GM12878 (cell line): ENCODE measurements at regions of chr9 and their contacts with region 1.

Region 1: DNA sequence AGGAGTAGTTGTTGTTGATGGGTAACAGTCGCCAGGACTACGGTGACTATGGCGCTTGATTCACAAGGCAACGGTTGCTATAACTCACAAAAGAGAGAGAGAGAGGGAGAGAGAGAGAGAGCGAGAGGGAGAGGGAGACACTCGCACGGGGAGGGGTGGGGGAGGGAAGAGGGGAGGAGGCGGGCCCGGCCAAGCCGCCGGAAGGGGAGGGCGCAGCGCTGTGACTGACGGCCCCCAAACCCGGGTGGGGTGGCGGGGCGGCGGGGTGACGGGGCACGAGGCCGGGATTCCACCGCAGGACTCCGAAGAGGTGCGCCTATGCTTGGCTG is at the start of gene RFX3:
- DNase-seq: peak; percentile 78
- ATAC-seq: peak; percentile 64
- H3K4me3 ChIP-seq: peak within 1 kb of the TSS; percentile 95
- H3K27ac ChIP-seq: peak within 1 kb of the TSS; percentile 96
- H3K4me1 ChIP-seq: no peaks in the 10 kb centered on the region; the same call in 1 of the 2 replicates
- H3K27me3 ChIP-seq: no peaks in the 10 kb centered on the region
- CTCF ChIP-seq: no peak
- EP300 ChIP-seq: peak; percentile 33 to 93; a peak in 3 of 4 replicates
- POLR2A ChIP-seq: no peak
- RAD21 ChIP-seq: 0 out of 2 replicates have a peak, but pooled peaks have one; percentile 1
- polyA plus RNA-seq, gene RFX3: 1.2 to 1.8 TPM

Region 2: GRCh38 chr9:3240656-3241268 is 285.0 kb before region 1 on chr9:
- CTCF ChIA-PET with region 1: interaction called, 4 read pairs
- POLR2A ChIA-PET with region 1: no interaction called
- RAD21 ChIA-PET with region 1: interaction called, 5 read pairs
- SMC1A ChIA-PET with region 1: interaction called, 4 read pairs
- in situ Hi-C with region 1: no loop called
- intact Hi-C with region 1: loop called (anchors 5 kb)
- DNase-seq: peak; percentile 35
- ATAC-seq: peak; percentile 97
- H3K4me3 ChIP-seq: no peak overlapping the region
- H3K27ac ChIP-seq: no peak overlapping the region
- H3K4me1 ChIP-seq: peaks cover 10% of the 10 kb centered on the region; the same call in 1 of the 2 replicates
- H3K27me3 ChIP-seq: no peaks in the 10 kb centered on the region
- CTCF ChIP-seq: peak; percentile 81 to 93 (median 86); a peak in 5 of 6 replicates
- EP300 ChIP-seq: no peak
- POLR2A ChIP-seq: no peak
- RAD21 ChIP-seq: peak; percentile 89

Region 3: DNA sequence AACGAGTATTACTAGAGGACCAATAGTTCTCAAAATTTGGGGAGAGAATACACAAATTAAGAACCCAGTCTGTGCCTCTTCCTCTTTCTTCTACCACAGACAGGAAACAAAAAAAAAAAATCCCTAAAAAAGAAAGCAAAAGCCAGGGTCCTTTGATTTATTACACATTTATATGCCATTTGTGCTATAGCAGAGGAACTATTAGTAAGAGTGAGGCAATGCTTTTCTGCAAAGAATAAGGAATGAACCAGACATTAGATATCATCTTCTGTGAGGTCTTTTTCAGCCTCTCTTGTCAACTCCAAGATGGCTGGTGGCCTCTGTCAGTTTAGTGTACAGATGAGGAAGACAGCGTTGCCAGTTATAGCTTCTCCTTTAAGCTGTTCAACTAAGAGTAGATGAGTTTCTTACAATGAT is 127.6 kb before region 1 on chr9:
- CTCF ChIA-PET with region 1: no interaction called
- POLR2A ChIA-PET with region 1: no interaction called
- RAD21 ChIA-PET with region 1: no interaction called
- SMC1A ChIA-PET with region 1: no interaction called
- in situ Hi-C with region 1: no loop called
- intact Hi-C with region 1: loop called (anchors 5 kb)
- DNase-seq: no peak
- ATAC-seq: peak; percentile 78
- H3K4me3 ChIP-seq: peak overlapping the region; percentile 23; the same call in 1 of the 2 replicates
- H3K27ac ChIP-seq: peak overlapping the region; percentile 74
- H3K4me1 ChIP-seq: peaks cover 3% of the 10 kb centered on the region; the same call in 1 of the 2 replicates
- H3K27me3 ChIP-seq: no peaks in the 10 kb centered on the region
- CTCF ChIP-seq: no peak
- EP300 ChIP-seq: no peak
- POLR2A ChIP-seq: no peak
- RAD21 ChIP-seq: no peak

Region 4: DNA sequence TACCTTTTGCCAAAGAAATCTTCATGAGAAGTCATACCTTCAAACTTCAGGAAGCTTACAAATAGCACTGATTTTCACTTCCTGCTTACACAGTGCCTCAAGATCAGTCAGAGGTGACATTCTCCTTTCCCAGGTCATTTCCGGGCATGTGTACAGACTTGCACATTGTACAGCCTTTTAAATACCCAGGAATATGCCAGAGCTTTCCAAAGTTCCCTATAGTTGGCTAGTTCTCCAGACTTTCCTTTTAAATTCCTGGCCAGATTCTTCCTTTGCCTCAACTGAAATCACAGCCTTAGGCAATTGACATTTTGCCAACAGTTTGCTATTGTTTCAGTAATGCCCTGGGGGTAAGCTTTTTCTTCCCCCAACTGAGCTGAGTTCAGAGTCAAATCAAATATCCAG is 47.2 kb before region 1 on chr9:
- CTCF ChIA-PET with region 1: interaction called, 37 read pairs
- POLR2A ChIA-PET with region 1: interaction called, 81 read pairs
- RAD21 ChIA-PET with region 1: interaction called, 180 read pairs
- SMC1A ChIA-PET with region 1: interaction called, 131 read pairs
- in situ Hi-C with region 1: loop called (anchors 5 kb)
- intact Hi-C with region 1: loop called (anchors 1 kb)
- DNase-seq: peak; percentile 74
- ATAC-seq: peak; percentile 60
- H3K4me3 ChIP-seq: peak overlapping the region; percentile 48; the same call in 1 of the 2 replicates
- H3K27ac ChIP-seq: peak overlapping the region; percentile 97
- H3K4me1 ChIP-seq: peaks cover 54% of the 10 kb centered on the region
- H3K27me3 ChIP-seq: no peaks in the 10 kb centered on the region
- CTCF ChIP-seq: no peak
- EP300 ChIP-seq: peak in 1 of 2 experiments; percentile 10; a peak in 1 of 4 replicates
- POLR2A ChIP-seq: no peak
- RAD21 ChIP-seq: no peak

Region 5: DNA sequence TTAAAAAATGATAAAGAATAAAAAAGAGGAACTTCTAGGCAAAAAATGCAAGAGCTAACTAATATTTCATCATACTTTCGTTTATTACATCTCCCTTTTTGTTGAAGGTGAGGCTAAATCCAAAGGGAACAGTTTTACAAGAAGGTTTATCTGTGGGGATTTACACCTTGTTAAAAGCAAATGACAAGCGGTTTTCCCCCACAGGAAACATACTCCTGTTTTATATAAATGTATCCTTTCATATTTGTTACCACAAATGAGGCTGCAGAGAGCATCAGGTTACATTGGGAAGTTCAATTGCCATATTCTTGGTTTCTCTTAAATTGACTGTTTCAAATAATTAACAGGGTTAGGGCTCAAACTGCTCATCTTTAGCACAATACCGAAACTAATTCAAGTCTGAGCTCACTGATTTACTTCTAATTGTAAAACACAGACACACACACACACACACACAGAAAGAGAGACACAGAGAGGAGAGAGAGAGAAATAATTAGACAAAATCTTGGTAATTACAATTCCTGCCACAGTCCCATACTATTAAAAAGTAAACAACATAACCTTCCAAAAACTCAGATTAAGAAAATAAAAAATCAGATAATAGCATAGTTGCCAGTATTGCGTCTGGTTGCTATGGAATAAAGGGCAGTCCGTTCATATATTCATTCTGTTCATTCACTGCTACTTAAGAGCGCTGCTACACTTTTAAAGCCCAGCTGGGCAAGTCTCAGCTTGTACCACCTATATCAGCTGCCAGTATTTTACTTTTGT is 17.1 kb before region 1 on chr9:
- CTCF ChIA-PET with region 1: interaction called, 23 read pairs
- POLR2A ChIA-PET with region 1: interaction called, 42 read pairs
- RAD21 ChIA-PET with region 1: interaction called, 37 read pairs
- SMC1A ChIA-PET with region 1: interaction called, 43 read pairs
- in situ Hi-C with region 1: no loop called
- intact Hi-C with region 1: loop called (anchors 1 kb)
- DNase-seq: no peak
- ATAC-seq: peak; percentile 74
- H3K4me3 ChIP-seq: peak overlapping the region; percentile 43
- H3K27ac ChIP-seq: peak overlapping the region; percentile 61
- H3K4me1 ChIP-seq: peaks cover 13% of the 10 kb centered on the region
- H3K27me3 ChIP-seq: no peaks in the 10 kb centered on the region
- CTCF ChIP-seq: no peak
- EP300 ChIP-seq: no peak
- POLR2A ChIP-seq: no peak
- RAD21 ChIP-seq: no peak

Region 6: GRCh38 chr9:3628239-3628638 is 102.4 kb after region 1 on chr9:
- CTCF ChIA-PET with region 1: no interaction called
- POLR2A ChIA-PET with region 1: no interaction called
- RAD21 ChIA-PET with region 1: no interaction called
- SMC1A ChIA-PET with region 1: no interaction called
- in situ Hi-C with region 1: no loop called
- intact Hi-C with region 1: no loop called
- DNase-seq: no peak
- ATAC-seq: no peak
- H3K4me3 ChIP-seq: no peak overlapping the region
- H3K27ac ChIP-seq: no peak overlapping the region
- H3K4me1 ChIP-seq: no peaks in the 10 kb centered on the region
- H3K27me3 ChIP-seq: no peaks in the 10 kb centered on the region
- CTCF ChIP-seq: no peak
- EP300 ChIP-seq: no peak
- POLR2A ChIP-seq: no peak
- RAD21 ChIP-seq: no peak

Region 7: DNA sequence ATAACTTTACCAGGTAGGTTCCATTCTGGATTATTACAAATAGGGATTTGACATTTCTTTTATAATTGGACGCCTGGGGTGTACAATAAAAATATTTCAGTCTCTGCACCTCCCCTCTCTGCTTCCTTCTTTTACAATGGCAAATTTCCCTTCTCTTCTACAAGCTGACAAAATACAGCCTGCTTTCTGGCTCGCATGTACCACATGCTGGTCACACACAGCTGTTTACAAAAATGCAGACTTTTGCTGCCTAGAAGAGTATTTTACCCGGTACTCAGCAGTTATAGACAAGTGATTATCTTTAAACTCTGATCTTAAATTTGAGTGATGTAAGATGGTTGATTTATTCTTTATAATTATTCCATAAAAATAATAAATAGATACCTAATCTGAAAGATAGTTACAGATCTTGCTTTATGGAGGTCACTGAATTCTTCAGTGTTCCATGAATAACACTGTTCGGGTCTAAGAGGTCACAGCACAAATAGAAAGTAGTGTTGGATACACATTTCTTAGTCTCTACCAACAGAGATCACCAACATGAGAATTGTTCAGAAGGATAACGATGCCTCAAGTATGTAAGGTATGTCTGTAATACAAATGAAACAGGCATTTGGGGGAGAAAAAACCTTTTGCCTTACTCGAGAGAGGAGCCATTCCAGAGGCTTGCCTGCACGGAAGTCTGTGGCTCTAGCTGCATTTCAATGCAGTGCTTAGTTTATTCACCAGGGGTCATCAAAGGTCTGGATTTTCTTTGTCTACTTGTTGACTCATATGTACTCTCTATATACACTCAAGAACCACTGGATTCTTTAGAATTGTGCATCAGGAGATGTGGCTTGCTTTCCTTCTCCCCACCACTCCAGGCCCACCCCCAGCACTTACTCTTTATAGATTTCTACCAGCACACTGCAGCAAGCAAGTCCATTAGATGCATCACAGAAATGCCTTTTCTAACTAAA is 206.6 kb after region 1 on chr9:
- CTCF ChIA-PET with region 1: no interaction called
- POLR2A ChIA-PET with region 1: no interaction called
- RAD21 ChIA-PET with region 1: interaction called, 6 read pairs
- SMC1A ChIA-PET with region 1: interaction called, 3 read pairs
- in situ Hi-C with region 1: no loop called
- intact Hi-C with region 1: loop called (anchors 2 kb)
- DNase-seq: peak; percentile 64
- ATAC-seq: peak; percentile 88
- H3K4me3 ChIP-seq: no peak overlapping the region
- H3K27ac ChIP-seq: no peak overlapping the region
- H3K4me1 ChIP-seq: peaks cover 22% of the 10 kb centered on the region
- H3K27me3 ChIP-seq: no peaks in the 10 kb centered on the region
- CTCF ChIP-seq: peak; percentile 60 to 83 (median 65)
- EP300 ChIP-seq: no peak
- POLR2A ChIP-seq: no peak
- RAD21 ChIP-seq: peak; percentile 83